ENCODE measurements at regions of chrX and their contacts with region 1.

Region 1: DNA sequence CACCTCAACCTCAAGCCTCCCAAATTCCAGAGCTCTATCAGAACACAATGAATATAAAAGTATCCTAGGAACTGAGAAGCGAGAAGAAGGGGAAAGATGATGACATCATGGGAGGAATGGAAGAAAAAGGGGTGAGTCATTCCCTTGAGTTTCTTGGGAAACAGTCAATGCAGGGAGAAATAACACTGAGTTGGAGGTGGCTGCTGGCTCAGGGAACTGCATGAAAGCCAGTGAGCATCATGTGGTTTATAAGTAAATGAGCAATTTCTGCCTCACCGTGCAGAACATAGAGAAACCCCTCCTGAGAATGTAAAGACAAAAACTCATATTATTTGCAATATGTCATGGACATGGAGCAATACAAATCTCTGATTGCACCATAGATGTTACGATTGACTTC is 73.3 kb downstream of the SHOX start:
- DNase-seq: no peak
- H3K4me3 Mint-ChIP-seq: no peak overlapping the region
- H3K27ac Mint-ChIP-seq: no peak overlapping the region
- H3K4me1 Mint-ChIP-seq: no peaks in the 10 kb centered on the region
- H3K27me3 Mint-ChIP-seq: no peaks in the 10 kb centered on the region

Region 2: DNA sequence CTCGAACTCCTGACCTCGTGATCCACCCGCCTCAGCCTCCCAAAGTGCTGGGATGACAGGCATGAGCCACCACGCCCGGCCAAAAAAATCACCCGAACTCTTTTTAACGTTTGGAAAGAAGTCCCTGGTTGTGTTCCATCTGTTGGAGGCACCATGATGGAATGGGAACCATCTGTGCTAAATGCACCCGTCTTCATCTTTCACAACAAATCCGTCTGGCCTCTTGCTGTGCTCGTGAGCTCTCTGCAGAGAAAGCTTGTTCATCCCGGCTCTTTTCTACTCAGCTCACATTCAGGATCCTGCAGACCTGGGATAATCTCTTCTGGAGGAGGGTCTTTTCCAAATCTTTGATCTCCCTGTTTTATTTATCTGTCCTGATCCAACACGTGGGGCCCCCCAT is 319.8 kb after region 1 on chrX:
- intact Hi-C with region 1: loop called (anchors 5 kb)
- DNase-seq: no peak
- H3K4me3 Mint-ChIP-seq: no peak overlapping the region
- H3K27ac Mint-ChIP-seq: no peak overlapping the region
- H3K4me1 Mint-ChIP-seq: peaks cover 16% of the 10 kb centered on the region
- H3K27me3 Mint-ChIP-seq: no peaks in the 10 kb centered on the region

Measured in activated T-helper 1 cell treated with anti-CD3 and anti-CD28 coated beads, Interleukin-12 subunit alpha, Interleukin-12 subunit beta, Interleukin-2, Interleukin-4 antibody, amounts not matched to agents 30 ng/mL and 10 ng/mL and 1 ng/mL, durations not matched to agents 14 hours and 24 hours and 36 hours (primary cell).